Gastrocnemius medialis (tissue), 4 donors: ENCODE measurements at regions of chr7 and their contacts with region 1.

Region 1: DNA sequence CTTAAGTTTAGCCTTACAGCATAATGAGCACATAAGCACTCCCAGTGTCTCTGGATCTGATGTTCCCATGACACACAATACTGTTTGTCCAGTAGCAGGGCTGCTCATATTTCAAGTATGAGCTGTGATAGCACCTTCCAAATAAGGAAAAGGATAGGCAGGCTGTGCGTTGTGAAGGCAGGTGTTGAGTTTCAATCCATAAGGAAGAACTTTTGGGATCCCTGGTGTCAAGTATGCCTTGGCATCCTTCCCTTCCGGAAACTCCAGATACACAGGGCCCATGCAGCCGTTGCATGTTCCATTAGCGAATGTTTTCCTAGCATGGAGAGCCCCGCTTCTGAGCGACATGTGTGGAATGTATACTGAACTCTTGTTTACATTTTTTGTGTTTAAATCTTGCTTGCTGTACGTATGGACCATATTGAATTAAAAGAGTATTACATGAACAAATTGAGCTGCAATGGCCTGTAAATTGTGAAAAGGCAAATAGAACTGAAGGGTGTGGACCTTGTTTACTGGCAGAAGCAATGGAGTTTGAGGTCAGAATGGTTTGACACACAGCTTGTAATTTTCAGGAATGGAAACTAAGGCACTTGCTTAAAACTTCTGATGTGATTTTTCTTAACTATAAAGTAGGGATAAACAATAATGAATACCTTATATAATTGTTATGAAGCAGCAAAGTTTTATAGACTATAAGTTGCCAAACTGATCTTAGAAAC is 33.8 kb upstream of the COBL start:
- DNase-seq: peak; percentile 18 to 49
- ATAC-seq: peak; percentile 91 to 99
- H3K4me3 ChIP-seq: peak overlapping the region in 1 of 4 donors; percentile 2
- H3K27ac ChIP-seq: peak overlapping the region; percentile 41 to 67 (median 48)
- H3K4me1 ChIP-seq: peaks cover 12 to 13% of the 10 kb centered on the region in 2 donors
- H3K27me3 ChIP-seq: no peaks in the 10 kb centered on the region
- CTCF ChIP-seq: no peak
- POLR2A ChIP-seq: no peak

Region 2: GRCh38 chr7:50449881-50450589 is 900.3 kb before region 1 on chr7 and contains the start of gene FIGNL1:
- in situ Hi-C with region 1: loop called in 1 of 4 experiments (anchors 25 kb)
- intact Hi-C with region 1: loop called (anchors 10 kb)
- DNase-seq: peak; percentile 44 to 72
- ATAC-seq: peak; percentile 91 to 92
- H3K4me3 ChIP-seq: peak within 1 kb of the TSS; percentile 65 to 87 (median 82)
- H3K27ac ChIP-seq: peak within 1 kb of the TSS; percentile 69 to 83 (median 80)
- H3K4me1 ChIP-seq: peaks cover 15 to 16% of the 10 kb centered on the region in 2 donors
- H3K27me3 ChIP-seq: no peaks in the 10 kb centered on the region
- CTCF ChIP-seq: no peak
- POLR2A ChIP-seq: peak in 1 of 2 donors; percentile 25
- total RNA-seq, gene FIGNL1: 2.3 to 9.2 (median 6.2) TPM